ENCODE measurements at regions of chr22 and their contacts with region 1.

Region 1: GRCh38 chr22:31089160-31090100 is 8.3 kb downstream of the SMTN start:
- DNase-seq: peak; percentile 90
- H3K4me3 ChIP-seq: no peak overlapping the region; a peak in 1 of 4 replicates
- H3K27ac ChIP-seq: no peak overlapping the region
- H3K4me1 ChIP-seq: peaks cover 0 to 6% of the 10 kb centered on the region in 2 experiments; a peak in 2 of 4 replicates
- H3K27me3 ChIP-seq: no peaks in the 10 kb centered on the region
- CTCF ChIP-seq: peak; percentile 89
- EP300 ChIP-seq: no peak
- RAD21 ChIP-seq: peak; percentile 81

Region 2: GRCh38 chr22:30947816-30948454 is 141.5 kb before region 1 on chr22:
- CTCF ChIA-PET with region 1: interaction called, 72 read pairs
- POLR2A ChIA-PET with region 1: interaction called, 7 read pairs
- DNase-seq: peak; percentile 38
- H3K4me3 ChIP-seq: no peak overlapping the region
- H3K27ac ChIP-seq: no peak overlapping the region; a peak in 1 of 4 replicates
- H3K4me1 ChIP-seq: peaks cover 0 to 12% of the 10 kb centered on the region in 2 experiments; a peak in 1 of 4 replicates
- H3K27me3 ChIP-seq: no peaks in the 10 kb centered on the region
- CTCF ChIP-seq: peak; percentile 67
- EP300 ChIP-seq: no peak
- RAD21 ChIP-seq: peak; percentile 73

Region 3: GRCh38 chr22:31139866-31140716 is 50.7 kb after region 1 on chr22 and contains the start of gene PLA2G3:
- CTCF ChIA-PET with region 1: interaction called, 22 read pairs
- POLR2A ChIA-PET with region 1: interaction called, 3 read pairs
- DNase-seq: peak; percentile 23
- H3K4me3 ChIP-seq: no peak within 1 kb of the TSS
- H3K27ac ChIP-seq: no peak within 1 kb of the TSS
- H3K4me1 ChIP-seq: peaks cover 0 to 32% of the 10 kb centered on the region in 2 experiments; a peak in 2 of 4 replicates
- H3K27me3 ChIP-seq: peaks cover 4% of the 10 kb centered on the region; the same call in 1 of the 2 replicates
- CTCF ChIP-seq: no peak
- EP300 ChIP-seq: no peak
- RAD21 ChIP-seq: no peak
- polyA plus RNA-seq, gene PLA2G3: not detected in 2 replicates

Measured in SK-N-SH (cell line).